GM12878 (cell line): ENCODE measurements at regions of chr6 and their contacts with region 1.

Region 1: DNA sequence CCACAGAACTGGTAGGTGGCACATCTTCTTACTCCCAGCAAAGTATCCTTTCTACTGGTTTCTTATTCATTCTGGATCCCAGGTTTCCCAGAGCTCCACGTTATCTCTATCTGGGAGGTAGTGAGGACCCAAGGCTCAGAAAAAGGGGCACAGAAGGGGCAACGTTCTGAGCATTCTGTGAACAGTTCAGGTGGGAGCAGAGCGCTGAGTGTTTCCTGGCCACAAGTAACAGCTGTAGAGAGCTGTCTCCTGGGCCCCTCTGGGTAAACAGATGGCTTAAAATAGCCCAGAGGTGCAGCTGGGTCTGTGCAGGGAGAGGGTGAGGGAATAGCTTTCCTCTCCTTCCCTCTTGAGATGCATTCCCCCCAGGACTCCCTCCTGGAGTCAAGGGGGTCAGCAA is 2.1 kb downstream of the APOBEC2 start:
- DNase-seq: no peak
- ATAC-seq: no peak
- H3K4me3 ChIP-seq: no peak overlapping the region
- H3K27ac ChIP-seq: no peak overlapping the region
- H3K4me1 ChIP-seq: no peaks in the 10 kb centered on the region
- H3K27me3 ChIP-seq: no peaks in the 10 kb centered on the region
- CTCF ChIP-seq: no peak
- EP300 ChIP-seq: no peak
- POLR2A ChIP-seq: no peak
- RAD21 ChIP-seq: no peak

Region 2: GRCh38 chr6:41066867-41067304 is 11.7 kb after region 1 on chr6:
- CTCF ChIA-PET with region 1: interaction called, 17 read pairs
- POLR2A ChIA-PET with region 1: interaction called, 3 read pairs
- RAD21 ChIA-PET with region 1: no interaction called
- SMC1A ChIA-PET with region 1: interaction called, 5 read pairs
- in situ Hi-C with region 1: no loop called
- intact Hi-C with region 1: no loop called
- DNase-seq: peak; percentile 26
- ATAC-seq: 0 out of 3 replicates have a peak, but pooled peaks have one; percentile 15
- H3K4me3 ChIP-seq: no peak overlapping the region
- H3K27ac ChIP-seq: no peak overlapping the region
- H3K4me1 ChIP-seq: 0 out of 2 replicates have a peak, but pooled peaks cover 2% of the 10 kb centered on the region
- H3K27me3 ChIP-seq: no peaks in the 10 kb centered on the region
- CTCF ChIP-seq: peak; percentile 72 to 86 (median 83)
- EP300 ChIP-seq: no peak
- POLR2A ChIP-seq: no peak
- RAD21 ChIP-seq: peak; percentile 64